CD8-positive, alpha-beta T cell (primary cell): ENCODE measurements at regions of chr20 and their contacts with region 1.

Region 1: DNA sequence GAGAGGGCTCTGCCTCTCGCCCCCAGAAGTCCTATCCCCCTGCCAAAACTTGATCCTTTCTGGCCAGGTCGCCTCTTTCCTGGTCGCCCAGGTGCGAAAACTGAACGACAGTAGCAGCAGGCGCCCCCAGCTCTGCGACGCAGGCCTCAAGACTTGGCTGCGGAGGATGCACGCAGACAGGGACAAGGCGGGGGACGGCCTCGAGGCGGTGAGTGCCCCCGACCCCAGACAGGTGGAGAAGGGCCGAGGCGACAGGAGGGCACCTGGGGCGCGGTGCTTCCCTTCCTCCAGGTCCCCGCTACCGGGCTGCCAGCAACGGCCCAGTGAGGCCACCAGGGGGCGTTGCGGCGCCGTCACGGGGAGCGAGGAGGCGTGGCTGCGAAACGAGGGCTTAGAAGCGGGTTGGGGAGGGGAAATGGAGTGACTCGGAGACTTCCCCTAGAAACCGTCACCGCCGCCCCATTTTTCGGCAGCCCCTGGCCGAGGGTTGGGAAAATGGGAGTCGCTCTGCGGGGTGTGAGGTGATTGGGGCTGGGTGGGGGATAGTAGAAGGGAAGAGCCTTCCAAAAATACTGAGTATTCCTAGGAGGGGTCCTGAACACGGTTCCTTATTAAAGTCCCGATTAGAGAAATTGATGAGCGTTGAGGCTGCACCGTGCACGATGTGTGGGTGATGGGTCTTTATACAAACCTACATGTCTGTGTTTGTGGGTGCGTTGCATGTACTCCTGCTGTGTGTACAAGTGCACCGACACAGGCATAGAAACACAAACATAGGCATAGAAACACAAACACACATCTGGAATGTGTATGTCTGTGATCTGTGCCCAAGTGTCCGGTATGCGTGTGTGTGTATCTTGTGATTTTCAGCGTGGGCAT is 44.6 kb downstream of the ARHGAP40 start:
- DNase-seq: peak; percentile 83 to 97 (median 91)
- ATAC-seq: peak; percentile 99
- H3K4me3 ChIP-seq: peak overlapping the region; percentile 13 to 25
- H3K4me3 Mint-ChIP-seq: peak overlapping the region; percentile 76
- H3K27ac ChIP-seq: no peak overlapping the region
- H3K27ac Mint-ChIP-seq: peak overlapping the region; percentile 28
- H3K4me1 ChIP-seq: peaks cover 4% of the 10 kb centered on the region
- H3K4me1 Mint-ChIP-seq: peaks cover 8% of the 10 kb centered on the region
- H3K27me3 ChIP-seq: peaks cover 8 to 11% of the 10 kb centered on the region in 2 experiments
- H3K27me3 Mint-ChIP-seq: peaks cover 30% of the 10 kb centered on the region
- CTCF ChIP-seq: peak; percentile 84

Region 2: DNA sequence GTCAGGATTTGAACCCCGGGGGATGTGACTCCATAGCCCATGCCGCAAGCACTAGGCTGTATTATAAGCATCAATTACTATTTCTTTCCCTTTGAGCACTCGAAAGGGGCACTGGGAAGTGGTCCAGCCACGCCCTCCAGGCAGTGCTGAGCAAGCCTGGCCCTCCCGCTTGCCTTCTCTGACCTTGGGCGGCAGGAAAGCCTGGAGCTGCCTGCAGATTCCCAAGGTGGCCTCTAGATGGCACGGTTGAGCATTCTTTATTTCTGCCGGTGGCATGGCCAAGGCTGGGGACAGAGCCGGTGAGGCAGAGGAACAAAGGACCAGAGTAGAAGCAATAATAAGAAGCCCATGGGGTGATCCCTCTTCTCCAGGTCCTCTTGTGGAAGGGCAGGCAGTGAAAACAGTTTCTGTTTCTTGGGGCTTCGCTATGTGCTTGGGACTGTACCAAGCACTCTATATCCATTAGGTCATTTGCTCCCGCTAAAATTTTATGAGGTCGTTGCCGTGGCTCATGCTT is 12.6 kb before region 1 on chr20:
- CTCF ChIA-PET with region 1: interaction called, 10 read pairs
- POLR2A ChIA-PET with region 1: no interaction called
- intact Hi-C with region 1: no loop called
- DNase-seq: peak; percentile 28 to 71 (median 56)
- ATAC-seq: peak; percentile 89
- H3K4me3 ChIP-seq: no peak overlapping the region
- H3K4me3 Mint-ChIP-seq: no peak overlapping the region
- H3K27ac ChIP-seq: no peak overlapping the region
- H3K27ac Mint-ChIP-seq: no peak overlapping the region
- H3K4me1 ChIP-seq: no peaks in the 10 kb centered on the region
- H3K4me1 Mint-ChIP-seq: peaks cover 4% of the 10 kb centered on the region
- H3K27me3 ChIP-seq: peaks cover 0 to 4% of the 10 kb centered on the region in 2 experiments
- H3K27me3 Mint-ChIP-seq: peaks cover 15% of the 10 kb centered on the region
- CTCF ChIP-seq: peak; percentile 95

Region 3: GRCh38 chr20:38730989-38731737 is 84.9 kb after region 1 on chr20:
- CTCF ChIA-PET with region 1: interaction called, 10 read pairs
- POLR2A ChIA-PET with region 1: no interaction called
- intact Hi-C with region 1: loop called (anchors 1 kb)
- DNase-seq: peak; percentile 60 to 86 (median 76)
- ATAC-seq: peak; percentile 75
- H3K4me3 ChIP-seq: peak overlapping the region; percentile 46 to 65
- H3K4me3 Mint-ChIP-seq: peak overlapping the region; percentile 73
- H3K27ac ChIP-seq: no peak overlapping the region
- H3K27ac Mint-ChIP-seq: no peak overlapping the region
- H3K4me1 ChIP-seq: peaks cover 34% of the 10 kb centered on the region
- H3K4me1 Mint-ChIP-seq: peaks cover 48% of the 10 kb centered on the region
- H3K27me3 ChIP-seq: peaks cover 60 to 79% of the 10 kb centered on the region in 2 experiments
- H3K27me3 Mint-ChIP-seq: peaks cover 90% of the 10 kb centered on the region
- CTCF ChIP-seq: peak; percentile 97

Region 4: DNA sequence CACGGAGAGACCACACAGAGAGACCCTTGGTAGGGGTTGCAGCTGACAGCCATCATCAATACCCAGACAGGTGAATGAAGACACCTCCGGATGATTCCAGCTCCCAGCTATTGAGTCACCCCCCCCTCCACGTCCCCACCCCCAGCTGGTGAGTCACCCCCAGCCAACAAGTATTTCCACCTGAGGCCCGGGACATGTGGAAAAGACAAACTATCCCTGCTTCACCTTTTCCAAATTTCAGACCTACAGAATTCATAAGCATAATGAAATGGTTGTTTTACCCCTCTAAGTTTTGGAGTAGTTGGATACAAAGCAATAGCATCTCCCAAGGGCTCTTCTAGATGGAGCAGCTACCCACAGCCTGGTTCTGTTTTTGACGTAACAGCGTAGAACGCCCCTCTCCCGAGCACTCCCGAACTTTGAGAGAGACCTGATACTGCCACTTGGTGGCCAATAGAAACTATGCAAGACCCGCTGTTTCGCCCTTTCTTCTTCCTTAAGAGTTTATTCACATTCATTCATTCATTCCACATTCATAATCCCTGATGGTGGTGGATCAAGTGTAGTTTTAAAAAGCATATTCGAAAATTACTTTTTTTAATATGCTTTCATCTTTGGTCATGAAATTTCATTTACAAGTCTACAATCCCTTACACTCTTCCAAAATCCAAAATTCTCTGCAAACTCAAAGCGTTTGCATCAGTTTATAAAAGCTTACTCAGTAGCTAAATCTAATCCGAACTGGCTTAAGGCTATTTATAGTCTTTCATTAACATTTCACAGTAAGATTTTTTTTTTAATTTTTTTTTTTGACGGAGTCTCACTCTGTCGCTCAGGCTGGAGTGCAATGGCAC is 144.2 kb after region 1 on chr20:
- CTCF ChIA-PET with region 1: interaction called, 4 read pairs
- POLR2A ChIA-PET with region 1: no interaction called
- intact Hi-C with region 1: loop called in 1 of 2 experiments (anchors 1 kb)
- DNase-seq: peak in 8 of 9 experiments; percentile 17 to 79 (median 54)
- ATAC-seq: peak; percentile 90
- H3K4me3 ChIP-seq: no peak overlapping the region
- H3K4me3 Mint-ChIP-seq: peak overlapping the region; percentile 30
- H3K27ac ChIP-seq: no peak overlapping the region
- H3K27ac Mint-ChIP-seq: no peak overlapping the region
- H3K4me1 ChIP-seq: no peaks in the 10 kb centered on the region
- H3K4me1 Mint-ChIP-seq: peaks cover 15% of the 10 kb centered on the region
- H3K27me3 ChIP-seq: no peaks in the 10 kb centered on the region
- H3K27me3 Mint-ChIP-seq: no peaks in the 10 kb centered on the region
- CTCF ChIP-seq: peak; percentile 69

Region 5: DNA sequence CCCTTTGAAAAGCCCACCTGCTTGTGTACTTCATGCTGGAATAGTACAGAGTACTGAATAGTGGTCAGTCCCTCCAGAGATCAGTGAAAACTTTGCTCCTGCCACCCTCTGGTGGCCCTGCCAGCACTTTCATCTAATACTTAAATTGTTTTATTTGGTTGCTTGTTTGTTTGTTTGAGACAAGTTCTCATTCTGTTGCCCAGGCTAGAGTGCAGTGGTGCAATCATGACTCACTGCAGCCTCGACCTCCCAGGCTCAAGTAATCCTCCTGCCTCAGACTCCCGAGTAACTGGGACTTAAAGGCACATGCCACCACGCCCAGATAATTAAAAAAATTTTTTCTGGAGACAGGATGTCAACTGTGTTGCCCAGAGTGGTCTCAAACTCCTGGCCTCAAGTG is 289.1 kb after region 1 on chr20:
- CTCF ChIA-PET with region 1: no interaction called
- POLR2A ChIA-PET with region 1: no interaction called
- intact Hi-C with region 1: loop called in 1 of 2 experiments (anchors 1 kb)
- DNase-seq: peak in 1 of 9 experiments; percentile 22
- ATAC-seq: no peak
- H3K4me3 ChIP-seq: no peak overlapping the region
- H3K4me3 Mint-ChIP-seq: no peak overlapping the region
- H3K27ac ChIP-seq: no peak overlapping the region
- H3K27ac Mint-ChIP-seq: no peak overlapping the region
- H3K4me1 ChIP-seq: no peaks in the 10 kb centered on the region
- H3K4me1 Mint-ChIP-seq: no peaks in the 10 kb centered on the region
- H3K27me3 ChIP-seq: no peaks in the 10 kb centered on the region
- H3K27me3 Mint-ChIP-seq: no peaks in the 10 kb centered on the region
- CTCF ChIP-seq: no peak

Region 6: DNA sequence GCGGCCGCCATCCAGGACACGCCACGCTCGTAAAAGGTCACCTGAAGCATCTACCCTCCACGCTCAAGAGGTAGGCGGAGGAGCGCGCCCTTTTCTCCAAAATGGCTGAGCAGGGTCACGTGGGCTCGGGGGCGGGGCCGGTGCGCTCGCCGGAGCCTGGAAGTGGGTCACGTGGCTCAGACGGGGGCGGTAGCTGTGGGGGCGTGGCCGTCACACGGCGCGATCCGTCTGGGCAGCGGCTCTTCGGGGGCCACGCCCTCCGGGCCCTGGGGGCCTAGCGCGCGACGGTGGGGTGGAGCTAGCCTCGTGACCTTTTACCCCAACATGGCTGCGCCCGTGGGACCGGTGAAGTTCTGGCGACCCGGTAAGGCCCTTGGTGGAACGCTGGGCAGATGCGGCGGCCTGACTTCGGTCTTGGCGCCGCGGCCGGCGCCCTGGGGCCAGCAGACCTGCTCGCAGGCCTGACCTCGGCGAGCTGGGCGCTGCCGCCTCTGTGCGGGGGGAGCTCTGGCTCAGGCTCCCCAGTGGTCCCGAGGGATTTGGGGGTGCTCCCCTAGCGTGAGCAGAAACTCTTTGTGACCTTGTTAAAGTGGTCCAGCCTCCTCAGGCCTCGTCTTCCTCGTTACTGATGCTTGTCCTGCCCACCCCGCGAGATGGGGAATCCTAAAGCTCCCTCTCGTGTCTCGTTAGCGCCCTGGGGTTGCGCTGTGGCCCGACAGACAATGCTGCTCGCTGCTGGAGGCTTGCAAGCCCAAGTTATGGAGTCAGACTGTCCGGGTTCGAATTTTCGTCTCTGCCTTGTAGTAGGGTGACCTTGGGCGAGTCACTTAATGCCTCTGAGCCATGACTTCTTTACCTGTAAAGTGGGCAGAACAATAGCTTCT is 316.1 kb after region 1 on chr20 and contains the start of gene DHX35:
- CTCF ChIA-PET with region 1: interaction called, 4 read pairs
- POLR2A ChIA-PET with region 1: no interaction called
- intact Hi-C with region 1: loop called in 1 of 2 experiments (anchors 1 kb)
- DNase-seq: peak; percentile 96 to 100 (median 98)
- ATAC-seq: peak; percentile 99
- H3K4me3 ChIP-seq: peak within 1 kb of the TSS; percentile 83 to 97
- H3K4me3 Mint-ChIP-seq: peak within 1 kb of the TSS; percentile 94
- H3K27ac ChIP-seq: peak within 1 kb of the TSS; percentile 76 to 82
- H3K27ac Mint-ChIP-seq: peak within 1 kb of the TSS; percentile 97
- H3K4me1 ChIP-seq: peaks cover 19% of the 10 kb centered on the region
- H3K4me1 Mint-ChIP-seq: peaks cover 28% of the 10 kb centered on the region
- H3K27me3 ChIP-seq: no peaks in the 10 kb centered on the region
- H3K27me3 Mint-ChIP-seq: no peaks in the 10 kb centered on the region
- CTCF ChIP-seq: no peak
- total RNA-seq, gene DHX35: 8.5 to 8.8 TPM

Region 7: DNA sequence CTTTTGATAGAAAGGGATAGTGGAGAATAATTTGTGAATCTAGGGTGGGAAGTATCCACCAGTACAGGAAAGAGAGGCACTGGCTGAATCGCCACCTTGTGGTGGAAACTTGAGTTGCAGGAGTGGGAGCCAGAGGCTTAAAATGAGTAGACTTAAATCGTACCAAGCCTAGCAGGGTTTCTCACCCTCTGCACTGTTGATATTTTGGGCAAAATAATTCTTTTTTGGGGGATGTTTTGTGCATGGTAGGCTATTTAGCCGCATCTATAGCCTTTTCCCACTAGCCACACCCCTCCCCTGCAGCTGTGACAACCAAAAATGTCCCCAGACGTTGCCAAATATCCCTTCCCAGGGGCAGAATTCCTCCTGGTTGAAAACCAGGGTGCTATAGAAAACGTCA is 435.0 kb after region 1 on chr20:
- CTCF ChIA-PET with region 1: no interaction called
- POLR2A ChIA-PET with region 1: no interaction called
- intact Hi-C with region 1: loop called (anchors 1 kb)
- DNase-seq: peak; percentile 59 to 87 (median 80)
- ATAC-seq: peak; percentile 76
- H3K4me3 ChIP-seq: no peak overlapping the region
- H3K4me3 Mint-ChIP-seq: no peak overlapping the region
- H3K27ac ChIP-seq: no peak overlapping the region
- H3K27ac Mint-ChIP-seq: no peak overlapping the region
- H3K4me1 ChIP-seq: no peaks in the 10 kb centered on the region
- H3K4me1 Mint-ChIP-seq: peaks cover 6% of the 10 kb centered on the region
- H3K27me3 ChIP-seq: no peaks in the 10 kb centered on the region
- H3K27me3 Mint-ChIP-seq: peaks cover 23% of the 10 kb centered on the region
- CTCF ChIP-seq: peak; percentile 82